Natural killer cell (primary cell): ENCODE measurements at regions of chr2 and their contacts with region 1.

Region 1: GRCh38 chr2:43194121-43194869 is 32.1 kb downstream of the ZFP36L2 start:
- DNase-seq: no peak
- ATAC-seq: no peak
- H3K4me3 ChIP-seq: peak overlapping the region; percentile 7
- H3K4me3 Mint-ChIP-seq: peak overlapping the region; percentile 90
- H3K27ac ChIP-seq: peak overlapping the region; percentile 95
- H3K27ac Mint-ChIP-seq: peak overlapping the region; percentile 95 to 97
- H3K4me1 ChIP-seq: peaks cover 73% of the 10 kb centered on the region
- H3K4me1 Mint-ChIP-seq: peaks cover 38 to 66% of the 10 kb centered on the region in 2 donors
- H3K27me3 ChIP-seq: no peaks in the 10 kb centered on the region
- H3K27me3 Mint-ChIP-seq: no peaks in the 10 kb centered on the region
- CTCF ChIP-seq: no peak

Region 2: DNA sequence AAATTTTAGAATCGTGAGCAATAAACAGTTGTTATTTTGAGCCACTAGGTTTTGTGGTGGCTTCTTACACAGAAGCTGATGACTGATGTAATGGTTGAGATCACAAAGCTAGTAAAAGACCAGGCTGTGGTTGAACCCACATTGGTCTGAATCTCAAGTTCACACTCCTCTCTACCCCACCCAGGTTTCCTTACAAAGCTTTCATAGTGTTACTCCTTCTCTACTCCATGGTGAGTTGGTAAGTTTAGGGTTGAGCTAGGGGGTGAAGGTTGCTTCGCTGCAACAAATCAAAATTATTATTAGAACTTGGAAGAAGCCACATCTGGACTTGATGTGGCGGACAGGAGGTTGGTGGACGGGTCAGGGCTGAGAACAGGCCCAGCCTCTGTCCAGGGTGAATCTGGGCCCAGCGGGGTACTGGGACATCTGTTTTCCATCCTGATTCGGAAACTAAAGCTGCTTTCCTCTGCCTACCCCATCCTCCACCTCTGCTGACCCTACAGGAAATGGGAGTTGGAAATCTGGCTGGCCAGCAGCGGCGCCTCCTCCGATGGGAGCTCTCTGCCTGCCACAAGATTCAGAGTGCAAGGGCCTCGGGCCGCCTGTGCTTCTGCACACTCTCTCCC is 54.2 kb before region 1 on chr2:
- intact Hi-C with region 1: loop called (anchors 2 kb)
- DNase-seq: peak in 1 of 2 donors; percentile 80
- ATAC-seq: peak; percentile 52 to 72 (median 65)
- H3K4me3 ChIP-seq: no peak overlapping the region
- H3K4me3 Mint-ChIP-seq: peak overlapping the region; percentile 87
- H3K27ac ChIP-seq: peak overlapping the region; percentile 97
- H3K27ac Mint-ChIP-seq: peak overlapping the region; percentile 87 to 96
- H3K4me1 ChIP-seq: peaks cover 86% of the 10 kb centered on the region
- H3K4me1 Mint-ChIP-seq: peaks cover 61 to 74% of the 10 kb centered on the region in 2 donors
- H3K27me3 ChIP-seq: no peaks in the 10 kb centered on the region
- H3K27me3 Mint-ChIP-seq: no peaks in the 10 kb centered on the region
- CTCF ChIP-seq: no peak

Region 3: DNA sequence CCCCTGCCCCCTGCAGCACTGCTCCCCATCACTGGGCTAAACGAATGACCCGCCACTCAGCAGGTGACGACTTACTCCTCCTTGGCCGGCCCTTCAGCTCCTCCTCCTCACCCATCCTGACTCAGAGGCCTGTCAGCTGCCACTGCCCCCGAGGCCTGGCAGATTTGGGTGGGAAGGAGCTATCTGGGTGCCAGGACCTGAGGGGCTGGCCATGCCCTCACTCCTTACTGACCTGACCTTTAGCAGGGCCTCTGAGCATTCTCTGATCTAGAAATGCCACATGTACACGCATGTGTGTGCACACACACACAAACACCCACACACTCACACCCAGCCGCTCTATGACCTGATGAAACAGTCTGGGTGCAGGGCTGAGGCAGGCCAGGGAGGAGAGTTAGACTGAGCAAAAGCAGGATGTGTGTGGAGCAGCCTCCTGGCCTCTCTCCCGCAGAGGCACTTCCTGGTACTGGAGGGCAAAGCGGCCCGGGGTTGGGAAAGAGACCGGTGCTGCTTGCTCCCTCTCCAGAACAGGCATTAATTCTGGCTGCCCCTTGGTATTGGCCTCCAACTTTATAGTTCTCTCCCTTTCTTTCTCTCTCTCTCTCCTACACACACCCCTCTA is 35.9 kb before region 1 on chr2:
- intact Hi-C with region 1: loop called (anchors 1 kb)
- DNase-seq: peak; percentile 39 to 80
- ATAC-seq: peak; percentile 33 to 53 (median 41)
- H3K4me3 ChIP-seq: no peak overlapping the region
- H3K4me3 Mint-ChIP-seq: peak overlapping the region; percentile 64
- H3K27ac ChIP-seq: peak overlapping the region; percentile 97
- H3K27ac Mint-ChIP-seq: peak overlapping the region; percentile 95 to 97
- H3K4me1 ChIP-seq: peaks cover 76% of the 10 kb centered on the region
- H3K4me1 Mint-ChIP-seq: peaks cover 27 to 55% of the 10 kb centered on the region in 2 donors
- H3K27me3 ChIP-seq: no peaks in the 10 kb centered on the region
- H3K27me3 Mint-ChIP-seq: no peaks in the 10 kb centered on the region
- CTCF ChIP-seq: no peak

Region 4: GRCh38 chr2:43174368-43174916 is 19.9 kb before region 1 on chr2:
- intact Hi-C with region 1: loop called (anchors 1 kb)
- DNase-seq: peak; percentile 59 to 92
- ATAC-seq: peak; percentile 69 to 83 (median 82)
- H3K4me3 ChIP-seq: peak overlapping the region; percentile 8
- H3K4me3 Mint-ChIP-seq: peak overlapping the region; percentile 88
- H3K27ac ChIP-seq: peak overlapping the region; percentile 94
- H3K27ac Mint-ChIP-seq: peak overlapping the region; percentile 99
- H3K4me1 ChIP-seq: peaks cover 96% of the 10 kb centered on the region
- H3K4me1 Mint-ChIP-seq: peaks cover 45 to 73% of the 10 kb centered on the region in 2 donors
- H3K27me3 ChIP-seq: no peaks in the 10 kb centered on the region
- H3K27me3 Mint-ChIP-seq: no peaks in the 10 kb centered on the region
- CTCF ChIP-seq: no peak

Region 5: DNA sequence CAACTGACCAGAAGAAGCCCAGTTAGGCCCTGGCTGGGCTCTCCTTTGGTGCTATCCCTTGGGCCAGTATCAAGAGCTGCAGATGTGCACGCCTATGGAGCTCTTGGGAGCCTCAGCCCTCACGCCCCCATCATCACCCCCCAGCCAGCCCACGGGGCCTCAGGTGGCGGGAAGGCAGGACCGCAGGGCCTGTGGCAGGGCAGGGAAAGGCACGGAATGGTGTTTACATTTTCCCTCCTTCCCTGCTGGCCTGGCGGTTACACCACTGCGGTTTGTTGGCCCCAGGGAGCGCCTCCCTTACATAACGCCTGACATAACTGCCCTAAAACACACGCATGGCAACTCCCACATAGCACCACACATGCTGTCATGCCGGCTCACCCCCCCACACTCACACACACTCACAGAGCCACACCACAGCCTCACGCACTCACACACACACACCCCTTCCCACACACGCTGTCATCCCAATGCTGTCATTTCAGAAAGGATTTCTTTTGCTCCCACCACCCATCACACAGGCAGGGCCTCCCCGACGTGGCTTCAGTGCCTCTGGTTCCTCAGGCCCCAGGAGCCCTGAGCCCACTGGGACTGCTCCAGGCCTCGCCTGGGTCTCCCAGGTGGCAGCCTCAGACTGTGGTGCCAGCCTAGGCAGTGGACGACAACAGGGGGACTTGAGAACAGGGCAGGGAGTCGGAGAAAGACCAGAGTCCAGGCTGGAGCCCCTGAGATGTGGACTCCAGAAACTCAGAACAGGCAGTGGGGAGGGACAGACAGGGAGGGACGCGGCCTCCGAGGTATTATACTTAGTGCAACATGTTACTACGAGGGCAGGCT is 16.4 kb after region 1 on chr2:
- intact Hi-C with region 1: loop called (anchors 2 kb)
- DNase-seq: peak; percentile 52 to 67
- ATAC-seq: peak; percentile 65 to 90 (median 79)
- H3K4me3 ChIP-seq: no peak overlapping the region
- H3K4me3 Mint-ChIP-seq: peak overlapping the region; percentile 43
- H3K27ac ChIP-seq: peak overlapping the region; percentile 38
- H3K27ac Mint-ChIP-seq: peak overlapping the region; percentile 76
- H3K4me1 ChIP-seq: peaks cover 54% of the 10 kb centered on the region
- H3K4me1 Mint-ChIP-seq: peaks cover 28 to 44% of the 10 kb centered on the region in 2 donors
- H3K27me3 ChIP-seq: no peaks in the 10 kb centered on the region
- H3K27me3 Mint-ChIP-seq: no peaks in the 10 kb centered on the region
- CTCF ChIP-seq: no peak

Region 6: DNA sequence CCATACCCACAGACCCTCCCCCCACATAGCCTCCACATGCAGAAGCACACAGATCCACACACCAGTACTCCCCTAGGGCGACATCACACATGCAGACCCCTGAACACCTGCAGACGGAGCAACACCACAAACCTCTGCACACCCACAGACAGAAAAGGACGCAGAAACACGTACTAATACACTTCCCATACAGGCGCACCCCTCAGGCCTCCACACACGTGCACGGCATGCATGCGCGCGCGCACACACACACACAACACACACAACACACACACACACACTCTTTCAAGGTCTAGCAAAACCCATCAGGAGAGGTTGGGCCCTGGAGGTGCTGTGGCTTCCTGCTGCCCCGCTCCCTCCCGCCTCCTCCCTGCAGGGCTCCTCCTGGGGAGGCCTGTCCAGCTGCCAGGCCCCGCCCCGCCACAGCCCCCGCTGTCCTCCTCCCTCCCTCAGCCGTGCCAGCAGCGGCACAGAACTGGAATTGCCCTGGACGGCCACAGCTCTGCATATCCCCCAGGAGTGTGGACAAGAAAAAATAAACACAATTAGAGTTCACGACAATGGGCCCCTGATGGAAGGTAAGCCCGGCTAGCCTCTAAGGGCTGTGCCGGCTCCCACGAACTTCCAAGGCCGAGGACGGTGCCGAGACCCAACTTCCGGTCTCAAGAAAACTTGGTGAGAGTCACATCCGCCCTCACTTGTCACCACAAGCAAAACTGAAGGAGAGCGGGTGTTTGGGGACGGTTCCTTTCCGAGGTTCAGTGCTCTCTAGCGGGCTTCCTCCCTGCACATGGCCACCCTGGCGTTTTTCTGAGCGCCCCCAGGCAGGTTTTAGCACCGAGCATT is 25.3 kb after region 1 on chr2:
- intact Hi-C with region 1: loop called (anchors 1 kb)
- DNase-seq: peak; percentile 73 to 93
- ATAC-seq: peak; percentile 39 to 70 (median 57)
- H3K4me3 ChIP-seq: peak overlapping the region; percentile 92
- H3K4me3 Mint-ChIP-seq: peak overlapping the region; percentile 82
- H3K27ac ChIP-seq: peak overlapping the region; percentile 96
- H3K27ac Mint-ChIP-seq: peak overlapping the region; percentile 90 to 99
- H3K4me1 ChIP-seq: peaks cover 58% of the 10 kb centered on the region
- H3K4me1 Mint-ChIP-seq: peaks cover 66 to 68% of the 10 kb centered on the region in 2 donors
- H3K27me3 ChIP-seq: no peaks in the 10 kb centered on the region
- H3K27me3 Mint-ChIP-seq: peaks cover 0 to 4% of the 10 kb centered on the region in 2 donors
- CTCF ChIP-seq: no peak